Dendritic cell treated with granulocyte-macrophage colony-stimulating factor and Interleukin-4, amounts not matched to agents 40 ng/mL and 50 ng/mL, for 4 days (primary cell): ENCODE measurements at regions of chr3 and their contacts with region 1.

Region 1: GRCh38 chr3:44529927-44530326 is 25.1 kb upstream of the ZKSCAN7 start:
- H3K4me3 Mint-ChIP-seq: no peak overlapping the region
- H3K27ac Mint-ChIP-seq: no peak overlapping the region
- H3K4me1 Mint-ChIP-seq: no peaks in the 10 kb centered on the region
- H3K27me3 Mint-ChIP-seq: peaks cover 4% of the 10 kb centered on the region

Region 2: DNA sequence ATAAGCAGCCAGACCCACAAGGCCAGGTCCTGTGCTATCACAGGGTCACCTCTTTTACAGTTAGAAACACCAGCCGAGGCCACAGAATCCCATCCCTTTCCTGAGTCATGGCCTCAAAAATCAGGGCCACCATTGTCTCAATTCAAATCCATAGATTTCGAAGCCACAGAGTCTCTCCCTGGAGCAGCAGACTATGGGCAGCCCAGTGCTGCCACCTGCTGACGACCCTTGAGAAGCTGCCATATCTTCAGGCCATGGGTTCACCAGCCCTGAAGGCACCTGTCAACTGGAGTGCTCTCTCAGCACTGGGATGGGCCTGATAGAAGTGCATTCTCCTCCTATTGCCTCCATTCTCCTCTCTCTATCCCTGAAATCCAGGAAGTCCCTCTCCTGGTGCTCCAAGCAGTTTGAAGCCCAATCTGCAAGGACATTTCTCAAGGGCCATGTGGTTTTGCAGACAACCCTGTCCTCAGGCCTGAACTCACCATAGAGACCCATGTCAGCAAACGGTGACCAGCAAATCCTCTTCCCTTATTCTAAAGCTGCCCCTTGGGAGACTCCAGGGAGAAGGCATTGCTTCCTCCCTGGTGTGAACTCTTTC is 384.0 kb after region 1 on chr3:
- intact Hi-C with region 1: loop called (anchors 1 kb)
- H3K4me3 Mint-ChIP-seq: no peak overlapping the region
- H3K27ac Mint-ChIP-seq: no peak overlapping the region
- H3K4me1 Mint-ChIP-seq: peaks cover 11% of the 10 kb centered on the region
- H3K27me3 Mint-ChIP-seq: peaks cover 19% of the 10 kb centered on the region

Region 3: DNA sequence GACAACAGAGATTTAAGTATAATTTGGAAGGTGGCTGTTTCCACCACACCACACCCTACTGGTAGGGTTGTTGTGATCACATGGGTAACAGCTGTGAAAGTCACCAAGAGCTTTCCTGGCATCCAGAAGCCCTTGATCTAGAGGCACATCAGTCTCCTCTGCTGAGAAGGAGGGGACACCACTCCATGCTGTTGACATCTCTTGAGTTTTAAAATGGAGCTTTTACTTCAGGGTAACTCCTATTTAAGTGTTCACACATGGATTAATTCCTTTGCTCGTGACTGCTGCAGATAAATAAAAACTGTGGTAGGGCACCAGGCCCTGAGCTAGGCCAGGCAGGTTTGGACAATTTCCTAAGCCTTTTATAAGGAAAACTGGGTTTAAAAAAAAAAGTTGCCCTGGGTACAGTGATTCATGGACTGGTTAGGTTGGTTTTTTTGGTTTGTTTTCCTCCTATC is 453.6 kb after region 1 on chr3:
- intact Hi-C with region 1: loop called (anchors 5 kb)
- H3K4me3 Mint-ChIP-seq: no peak overlapping the region
- H3K27ac Mint-ChIP-seq: no peak overlapping the region
- H3K4me1 Mint-ChIP-seq: peaks cover 53% of the 10 kb centered on the region
- H3K27me3 Mint-ChIP-seq: no peaks in the 10 kb centered on the region